Caco-2 (cell line): ENCODE measurements at regions of chr6 and their contacts with region 1.

Region 1: DNA sequence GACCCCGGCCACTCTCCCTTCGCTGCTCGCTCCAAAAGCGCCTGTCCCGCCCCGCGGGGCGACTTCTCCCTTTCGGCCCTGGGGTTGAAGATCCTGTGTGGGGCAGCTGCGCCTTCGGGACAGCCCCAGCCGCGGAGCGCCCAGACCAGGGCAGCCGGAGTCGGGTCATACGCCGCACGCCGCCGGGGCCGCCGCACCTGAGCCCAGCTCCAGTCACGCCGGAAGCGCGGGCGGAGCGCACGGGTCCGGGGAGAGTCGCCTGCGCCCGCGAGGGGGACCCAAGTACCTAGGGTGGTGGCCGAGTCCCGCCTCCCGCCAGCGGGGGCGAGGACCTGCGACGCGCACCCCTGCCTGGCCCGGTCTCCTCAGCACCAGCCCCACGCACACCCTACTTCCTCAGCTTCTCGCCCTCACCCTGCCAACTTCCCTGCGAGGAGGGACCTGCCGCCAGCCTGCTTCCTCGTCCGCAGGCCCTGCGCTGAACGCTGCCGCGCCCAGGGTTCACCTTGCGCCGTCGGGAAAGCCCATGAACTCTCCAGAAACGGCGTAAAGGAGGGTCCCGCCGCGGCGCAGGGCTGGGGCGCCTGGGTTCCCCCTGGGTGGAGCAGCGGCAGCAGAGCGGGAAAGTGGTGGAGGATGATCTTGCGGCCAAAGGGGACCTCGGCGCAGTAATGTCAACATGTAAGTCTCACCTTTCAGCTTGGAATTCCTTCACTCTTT is at the start of gene ADGRG6:
- DNase-seq: peak; percentile 85 to 88
- H3K4me3 ChIP-seq: peak within 1 kb of the TSS; percentile 68
- H3K4me3 Mint-ChIP-seq: peak within 1 kb of the TSS; percentile 92
- H3K27ac Mint-ChIP-seq: peak within 1 kb of the TSS; percentile 87
- H3K4me1 ChIP-seq: peaks cover 63% of the 10 kb centered on the region
- H3K4me1 Mint-ChIP-seq: peaks cover 43% of the 10 kb centered on the region
- H3K27me3 ChIP-seq: no peaks in the 10 kb centered on the region
- H3K27me3 Mint-ChIP-seq: no peaks in the 10 kb centered on the region
- CTCF ChIP-seq: peak; percentile 41 to 44
- total RNA-seq, gene ADGRG6: 98.0 and 98.7 TPM in 2 replicates

Region 2: DNA sequence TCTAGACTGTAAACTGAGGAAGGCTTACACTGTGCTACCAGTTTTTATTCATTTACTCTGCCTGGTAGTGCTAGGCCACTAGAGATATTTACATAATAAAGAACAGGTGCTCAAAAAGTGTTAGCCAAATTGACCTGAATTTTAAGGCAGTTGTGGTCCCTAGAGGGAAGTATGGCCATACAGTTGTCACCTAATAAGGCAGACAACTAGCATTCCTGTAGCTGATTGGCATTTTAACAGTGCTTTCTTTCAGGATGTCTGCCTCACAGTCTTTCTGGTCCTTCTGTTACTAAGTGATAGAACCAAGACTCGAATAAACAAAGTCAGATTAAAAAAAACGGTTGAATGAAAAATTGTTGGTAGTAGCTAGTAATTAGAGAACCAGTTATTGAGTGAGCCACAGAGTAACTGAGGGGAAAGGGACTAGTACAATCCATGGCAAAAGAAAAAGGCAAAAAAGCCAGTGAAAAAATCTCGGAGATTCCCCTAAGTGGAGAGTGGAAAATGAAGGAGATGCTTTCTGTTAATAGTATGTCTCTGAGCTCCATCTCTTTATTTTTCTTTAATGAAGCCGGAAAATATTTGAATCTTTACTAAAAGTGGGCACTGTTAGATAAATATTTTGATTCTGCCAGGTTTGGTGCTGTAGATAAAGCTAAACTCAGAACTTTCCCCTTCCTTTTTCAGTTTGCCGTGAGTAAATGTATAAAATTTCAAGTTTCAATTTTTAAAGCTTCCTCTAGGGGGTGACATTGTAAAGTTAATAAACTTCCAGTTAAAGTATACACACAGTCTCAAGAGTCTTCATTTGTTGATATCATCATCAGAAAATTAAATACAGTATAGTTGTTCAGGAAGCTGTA is 145.7 kb before region 1 on chr6:
- CTCF ChIA-PET with region 1: no interaction called
- POLR2A ChIA-PET with region 1: no interaction called
- intact Hi-C with region 1: loop called (anchors 2 kb)
- DNase-seq: peak in 1 of 2 experiments; percentile 13
- H3K4me3 ChIP-seq: no peak overlapping the region
- H3K4me3 Mint-ChIP-seq: no peak overlapping the region
- H3K27ac Mint-ChIP-seq: no peak overlapping the region
- H3K4me1 ChIP-seq: no peaks in the 10 kb centered on the region
- H3K4me1 Mint-ChIP-seq: no peaks in the 10 kb centered on the region
- H3K27me3 ChIP-seq: no peaks in the 10 kb centered on the region
- H3K27me3 Mint-ChIP-seq: no peaks in the 10 kb centered on the region
- CTCF ChIP-seq: peak; percentile 36 to 46

Region 3: GRCh38 chr6:142242269-142242668 is 59.5 kb before region 1 on chr6:
- CTCF ChIA-PET with region 1: no interaction called
- POLR2A ChIA-PET with region 1: interaction called, 3 read pairs
- intact Hi-C with region 1: loop called (anchors 1 kb)
- DNase-seq: peak in 1 of 2 experiments; percentile 38
- H3K4me3 ChIP-seq: no peak overlapping the region
- H3K4me3 Mint-ChIP-seq: peak overlapping the region; percentile 26
- H3K27ac Mint-ChIP-seq: peak overlapping the region; percentile 78
- H3K4me1 ChIP-seq: peaks cover 35% of the 10 kb centered on the region
- H3K4me1 Mint-ChIP-seq: peaks cover 14% of the 10 kb centered on the region
- H3K27me3 ChIP-seq: no peaks in the 10 kb centered on the region
- H3K27me3 Mint-ChIP-seq: no peaks in the 10 kb centered on the region
- CTCF ChIP-seq: no peak

Region 4: DNA sequence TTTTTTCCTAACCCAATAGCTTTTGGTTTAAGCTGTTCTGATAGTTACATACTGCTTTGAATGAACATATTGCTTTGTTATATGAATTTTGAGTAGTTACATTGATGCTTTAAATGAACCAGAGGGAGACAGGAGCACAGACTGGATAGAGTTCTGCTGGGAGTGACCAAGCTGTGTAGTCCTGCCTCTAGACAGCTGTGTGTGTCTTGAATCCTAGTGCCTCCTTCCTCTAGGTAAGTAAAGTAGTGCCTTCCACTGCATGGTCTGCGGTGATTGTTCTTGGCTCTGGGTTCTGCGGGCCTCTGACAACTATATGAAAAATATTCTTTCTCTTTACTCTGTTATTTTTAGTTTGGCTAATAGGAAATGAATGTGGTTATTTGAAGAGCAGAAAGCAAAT is 46.0 kb before region 1 on chr6:
- CTCF ChIA-PET with region 1: no interaction called
- POLR2A ChIA-PET with region 1: no interaction called
- intact Hi-C with region 1: loop called (anchors 1 kb)
- DNase-seq: no peak
- H3K4me3 ChIP-seq: no peak overlapping the region
- H3K4me3 Mint-ChIP-seq: no peak overlapping the region
- H3K27ac Mint-ChIP-seq: no peak overlapping the region
- H3K4me1 ChIP-seq: peaks cover 22% of the 10 kb centered on the region
- H3K4me1 Mint-ChIP-seq: peaks cover 19% of the 10 kb centered on the region
- H3K27me3 ChIP-seq: no peaks in the 10 kb centered on the region
- H3K27me3 Mint-ChIP-seq: no peaks in the 10 kb centered on the region
- CTCF ChIP-seq: no peak

Region 5: GRCh38 chr6:142275251-142276006 is 26.4 kb before region 1 on chr6:
- CTCF ChIA-PET with region 1: interaction called, 4 read pairs
- POLR2A ChIA-PET with region 1: no interaction called
- intact Hi-C with region 1: loop called (anchors 1 kb)
- DNase-seq: no peak
- H3K4me3 ChIP-seq: no peak overlapping the region
- H3K4me3 Mint-ChIP-seq: peak overlapping the region; percentile 9
- H3K27ac Mint-ChIP-seq: peak overlapping the region; percentile 6
- H3K4me1 ChIP-seq: peaks cover 50% of the 10 kb centered on the region
- H3K4me1 Mint-ChIP-seq: peaks cover 42% of the 10 kb centered on the region
- H3K27me3 ChIP-seq: no peaks in the 10 kb centered on the region
- H3K27me3 Mint-ChIP-seq: no peaks in the 10 kb centered on the region
- CTCF ChIP-seq: no peak

Region 6: GRCh38 chr6:142323377-142324040 is 21.7 kb after region 1 on chr6:
- CTCF ChIA-PET with region 1: interaction called, 3 read pairs
- POLR2A ChIA-PET with region 1: interaction called, 3 read pairs
- intact Hi-C with region 1: loop called (anchors 1 kb)
- DNase-seq: peak; percentile 49 to 80
- H3K4me3 ChIP-seq: no peak overlapping the region
- H3K4me3 Mint-ChIP-seq: peak overlapping the region; percentile 29
- H3K27ac Mint-ChIP-seq: peak overlapping the region; percentile 80
- H3K4me1 ChIP-seq: peaks cover 70% of the 10 kb centered on the region
- H3K4me1 Mint-ChIP-seq: peaks cover 52% of the 10 kb centered on the region
- H3K27me3 ChIP-seq: no peaks in the 10 kb centered on the region
- H3K27me3 Mint-ChIP-seq: no peaks in the 10 kb centered on the region
- CTCF ChIP-seq: no peak

Region 7: DNA sequence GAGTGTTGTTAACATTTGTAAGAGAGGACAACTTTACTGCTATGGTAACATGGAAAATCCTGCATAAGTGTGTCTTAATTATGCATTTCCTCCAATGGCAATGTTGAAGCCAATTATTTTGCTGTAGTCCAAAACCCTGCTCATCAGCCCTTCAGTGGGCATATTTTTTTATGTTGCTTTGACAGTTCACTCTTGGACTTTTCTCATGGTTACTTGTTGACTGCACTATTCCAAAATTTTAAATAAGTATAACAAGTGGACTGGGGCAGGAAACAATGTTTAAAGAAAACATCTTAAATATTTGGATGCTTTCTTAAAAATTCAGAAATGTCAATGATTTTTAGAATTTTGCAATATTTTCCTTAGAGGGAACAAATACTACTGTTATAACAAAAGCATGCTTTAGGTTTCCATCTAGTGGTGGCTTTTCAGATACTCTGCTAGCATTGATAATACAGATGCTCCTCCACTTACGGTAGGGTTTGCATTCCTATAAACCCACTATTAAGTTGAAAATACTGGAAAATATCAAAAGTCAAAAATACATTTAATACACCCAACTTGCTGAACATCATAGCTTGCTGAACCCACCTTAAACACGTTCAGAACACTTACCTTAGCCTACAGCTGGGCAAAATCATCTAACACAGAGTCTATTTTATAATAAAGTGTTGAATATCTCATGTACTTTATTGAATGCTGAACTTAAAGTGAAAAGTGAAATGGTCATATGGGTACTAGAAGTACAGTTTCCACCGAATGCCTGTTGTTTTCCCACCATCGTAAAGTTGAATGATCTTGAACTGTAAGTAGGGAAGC is 86.4 kb after region 1 on chr6:
- CTCF ChIA-PET with region 1: interaction called, 16 read pairs
- POLR2A ChIA-PET with region 1: interaction called, 4 read pairs
- intact Hi-C with region 1: loop called (anchors 1 kb)
- DNase-seq: peak in 1 of 2 experiments; percentile 46
- H3K4me3 ChIP-seq: no peak overlapping the region
- H3K4me3 Mint-ChIP-seq: no peak overlapping the region
- H3K27ac Mint-ChIP-seq: peak overlapping the region; percentile 38
- H3K4me1 ChIP-seq: no peaks in the 10 kb centered on the region; the same call in 1 of the 2 replicates
- H3K4me1 Mint-ChIP-seq: peaks cover 10% of the 10 kb centered on the region
- H3K27me3 ChIP-seq: no peaks in the 10 kb centered on the region
- H3K27me3 Mint-ChIP-seq: no peaks in the 10 kb centered on the region
- CTCF ChIP-seq: peak; percentile 60 to 69

Region 8: GRCh38 chr6:142537612-142538478 is 236.0 kb after region 1 on chr6:
- CTCF ChIA-PET with region 1: no interaction called
- POLR2A ChIA-PET with region 1: no interaction called
- intact Hi-C with region 1: no loop called
- DNase-seq: peak in 1 of 2 experiments; percentile 19
- H3K4me3 ChIP-seq: no peak overlapping the region
- H3K4me3 Mint-ChIP-seq: no peak overlapping the region
- H3K27ac Mint-ChIP-seq: no peak overlapping the region
- H3K4me1 ChIP-seq: no peaks in the 10 kb centered on the region
- H3K4me1 Mint-ChIP-seq: no peaks in the 10 kb centered on the region
- H3K27me3 ChIP-seq: no peaks in the 10 kb centered on the region
- H3K27me3 Mint-ChIP-seq: no peaks in the 10 kb centered on the region
- CTCF ChIP-seq: peak; percentile 5 to 40